ENCODE measurements at regions of chr14 and their contacts with region 1.

Region 1: DNA sequence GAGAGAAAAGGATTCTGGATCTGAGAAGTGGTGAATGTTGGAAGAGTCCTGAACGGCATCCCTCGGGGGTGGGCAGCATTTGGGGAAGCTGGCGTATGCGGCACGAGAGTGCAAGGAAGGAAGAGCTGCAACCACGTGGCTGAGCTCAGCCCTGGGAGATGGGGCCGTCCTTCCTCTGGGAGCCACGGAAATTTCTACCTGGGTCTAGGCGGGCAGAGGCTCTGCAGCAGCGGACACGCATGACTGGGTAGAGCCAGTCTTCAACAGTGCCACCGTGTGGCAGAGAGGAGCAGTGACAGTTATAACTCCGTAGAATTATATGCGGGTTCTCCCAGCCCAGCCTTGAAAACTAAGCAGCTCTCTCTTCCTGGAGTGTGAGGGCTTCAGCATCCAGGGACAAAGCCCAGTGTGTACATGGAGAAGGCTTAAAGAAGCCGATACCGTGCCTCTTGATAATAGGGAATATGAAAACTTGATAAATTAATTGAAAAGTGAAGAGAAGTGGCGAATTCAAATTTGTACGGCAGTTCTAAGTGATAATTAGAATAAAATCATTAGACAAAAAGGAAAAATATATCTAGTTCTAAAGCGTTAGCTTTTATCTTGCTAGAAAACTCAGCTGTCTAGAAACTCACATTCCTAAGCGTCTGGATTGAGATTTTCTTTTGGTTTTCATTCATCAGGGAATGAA is 82.9 kb upstream of the STXBP6 start:
- DNase-seq: peak; percentile 84
- ATAC-seq: peak; percentile 99
- H3K4me3 ChIP-seq: no peak overlapping the region
- H3K27ac ChIP-seq: no peak overlapping the region
- H3K4me1 ChIP-seq: peaks cover 4% of the 10 kb centered on the region; the same call in 1 of the 2 replicates
- H3K27me3 ChIP-seq: peaks cover 0 to 8% of the 10 kb centered on the region in 2 experiments; a peak in 2 of 5 replicates
- CTCF ChIP-seq: peak; percentile 100
- EP300 ChIP-seq: no peak
- POLR2A ChIP-seq: no peak
- RAD21 ChIP-seq: peak; percentile 97

Region 2: DNA sequence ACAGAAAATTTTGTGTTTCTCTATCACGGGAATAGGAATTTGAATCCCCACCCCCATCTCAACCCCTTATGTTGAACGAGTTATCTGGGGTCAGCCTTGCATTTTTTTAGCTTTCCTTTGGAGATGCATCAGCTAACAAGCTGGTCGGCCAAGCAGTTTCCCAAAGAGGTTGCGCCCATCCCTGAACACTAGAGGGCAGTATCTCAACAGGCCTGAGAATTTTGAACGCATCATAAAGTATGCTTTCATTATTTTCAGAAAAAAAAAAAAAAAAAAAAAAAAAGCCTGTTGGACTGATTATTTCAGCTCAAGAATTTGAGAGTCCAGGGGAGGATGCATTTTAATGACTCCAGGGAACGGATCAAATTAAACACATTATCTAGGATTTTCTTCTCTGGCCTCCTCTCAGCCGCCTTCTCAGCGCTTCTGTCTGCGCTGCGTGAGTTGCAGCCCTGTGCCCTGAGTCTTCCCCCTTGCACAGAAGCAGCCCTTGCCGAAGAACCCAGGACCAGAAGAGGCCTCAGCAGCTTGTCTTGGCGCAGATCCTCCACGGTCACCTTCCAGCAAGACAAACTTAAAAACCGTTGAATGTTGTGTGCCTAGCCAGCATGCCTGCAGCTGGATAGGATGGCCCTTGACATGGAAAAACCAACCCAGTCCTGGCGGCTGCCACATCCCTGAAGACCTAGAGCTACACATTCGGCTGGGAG is 422.3 kb before region 1 on chr14:
- CTCF ChIA-PET with region 1: interaction called, 39 read pairs
- POLR2A ChIA-PET with region 1: no interaction called
- in situ Hi-C with region 1: no loop called
- intact Hi-C with region 1: loop called (anchors 1 kb)
- DNase-seq: peak; percentile 71
- ATAC-seq: peak; percentile 81
- H3K4me3 ChIP-seq: no peak overlapping the region
- H3K27ac ChIP-seq: no peak overlapping the region
- H3K4me1 ChIP-seq: peaks cover 7% of the 10 kb centered on the region
- H3K27me3 ChIP-seq: peaks cover 4 to 22% of the 10 kb centered on the region in 2 experiments; a peak in 2 of 5 replicates
- CTCF ChIP-seq: peak; percentile 83
- EP300 ChIP-seq: no peak
- POLR2A ChIP-seq: no peak
- RAD21 ChIP-seq: peak; percentile 65

Region 3: DNA sequence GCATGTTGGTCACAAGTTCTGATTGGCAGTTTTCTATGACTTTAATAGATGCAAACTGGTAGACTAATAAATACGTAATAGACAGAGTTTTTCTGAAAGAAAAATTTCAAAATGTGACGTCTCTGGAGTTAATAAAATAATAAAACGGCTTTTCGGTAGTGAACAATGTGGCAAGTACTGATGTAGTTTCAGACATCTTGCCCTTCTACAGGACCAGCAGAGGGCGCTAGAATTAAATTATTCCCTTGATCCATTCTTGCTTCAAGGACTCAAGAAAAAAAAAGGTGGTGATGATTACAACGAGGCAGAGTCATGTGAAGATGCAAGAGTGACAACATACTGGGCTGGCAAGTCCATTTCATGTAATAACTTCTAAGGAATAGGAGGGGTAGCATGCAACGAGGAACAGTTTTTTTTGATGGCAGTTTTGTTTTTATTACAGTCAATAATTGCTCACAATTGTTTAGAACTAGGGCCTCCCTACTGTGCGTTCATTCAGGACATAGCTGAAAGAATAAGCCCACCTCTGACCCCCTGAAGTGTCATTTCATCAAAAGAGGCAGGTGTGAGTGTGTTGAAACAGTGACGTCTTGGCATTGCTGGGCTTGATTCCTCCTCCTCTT is 397.9 kb before region 1 on chr14:
- CTCF ChIA-PET with region 1: interaction called, 91 read pairs
- POLR2A ChIA-PET with region 1: no interaction called
- in situ Hi-C with region 1: loop called (anchors 5 kb)
- intact Hi-C with region 1: loop called (anchors 1 kb)
- DNase-seq: peak; percentile 86
- ATAC-seq: peak; percentile 95
- H3K4me3 ChIP-seq: no peak overlapping the region
- H3K27ac ChIP-seq: no peak overlapping the region
- H3K4me1 ChIP-seq: no peaks in the 10 kb centered on the region
- H3K27me3 ChIP-seq: no peaks in the 10 kb centered on the region
- CTCF ChIP-seq: peak; percentile 91
- EP300 ChIP-seq: no peak
- POLR2A ChIP-seq: no peak
- RAD21 ChIP-seq: peak; percentile 88

Region 4: DNA sequence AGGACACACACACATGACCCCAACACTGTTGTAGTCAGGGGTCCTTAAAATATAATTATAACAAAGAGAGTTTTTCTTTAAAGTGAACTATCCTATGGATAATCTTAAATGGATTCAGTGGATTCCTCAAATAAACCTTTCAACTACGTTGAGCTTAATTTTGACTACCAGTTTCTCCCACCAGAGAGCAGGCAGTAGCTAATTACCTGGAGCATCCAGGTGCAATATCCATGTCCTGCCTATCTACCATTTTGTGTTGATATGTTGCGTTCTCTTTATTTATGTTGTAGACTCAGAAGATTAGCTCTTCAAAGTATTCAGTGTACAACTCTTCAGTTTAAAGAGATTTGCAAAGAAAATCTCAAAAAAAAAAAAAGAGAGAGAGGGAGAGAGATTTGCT is 371.7 kb before region 1 on chr14:
- CTCF ChIA-PET with region 1: interaction called, 17 read pairs
- POLR2A ChIA-PET with region 1: no interaction called
- in situ Hi-C with region 1: no loop called
- intact Hi-C with region 1: loop called (anchors 1 kb)
- DNase-seq: peak; percentile 28
- ATAC-seq: peak; percentile 71
- H3K4me3 ChIP-seq: no peak overlapping the region
- H3K27ac ChIP-seq: no peak overlapping the region
- H3K4me1 ChIP-seq: no peaks in the 10 kb centered on the region
- H3K27me3 ChIP-seq: no peaks in the 10 kb centered on the region; a peak in 1 of 5 replicates
- CTCF ChIP-seq: peak; percentile 56
- EP300 ChIP-seq: no peak
- POLR2A ChIP-seq: no peak
- RAD21 ChIP-seq: no peak

Region 5: GRCh38 chr14:24806061-24806678 is 326.7 kb before region 1 on chr14:
- CTCF ChIA-PET with region 1: interaction called, 94 read pairs
- POLR2A ChIA-PET with region 1: interaction called, 13 read pairs
- in situ Hi-C with region 1: loop called (anchors 5 kb)
- intact Hi-C with region 1: loop called (anchors 1 kb)
- DNase-seq: peak; percentile 88
- ATAC-seq: peak; percentile 81
- H3K4me3 ChIP-seq: no peak overlapping the region
- H3K27ac ChIP-seq: no peak overlapping the region
- H3K4me1 ChIP-seq: peaks cover 58% of the 10 kb centered on the region
- H3K27me3 ChIP-seq: no peaks in the 10 kb centered on the region
- CTCF ChIP-seq: peak; percentile 99
- EP300 ChIP-seq: no peak
- POLR2A ChIP-seq: no peak
- RAD21 ChIP-seq: peak; percentile 99

Region 6: DNA sequence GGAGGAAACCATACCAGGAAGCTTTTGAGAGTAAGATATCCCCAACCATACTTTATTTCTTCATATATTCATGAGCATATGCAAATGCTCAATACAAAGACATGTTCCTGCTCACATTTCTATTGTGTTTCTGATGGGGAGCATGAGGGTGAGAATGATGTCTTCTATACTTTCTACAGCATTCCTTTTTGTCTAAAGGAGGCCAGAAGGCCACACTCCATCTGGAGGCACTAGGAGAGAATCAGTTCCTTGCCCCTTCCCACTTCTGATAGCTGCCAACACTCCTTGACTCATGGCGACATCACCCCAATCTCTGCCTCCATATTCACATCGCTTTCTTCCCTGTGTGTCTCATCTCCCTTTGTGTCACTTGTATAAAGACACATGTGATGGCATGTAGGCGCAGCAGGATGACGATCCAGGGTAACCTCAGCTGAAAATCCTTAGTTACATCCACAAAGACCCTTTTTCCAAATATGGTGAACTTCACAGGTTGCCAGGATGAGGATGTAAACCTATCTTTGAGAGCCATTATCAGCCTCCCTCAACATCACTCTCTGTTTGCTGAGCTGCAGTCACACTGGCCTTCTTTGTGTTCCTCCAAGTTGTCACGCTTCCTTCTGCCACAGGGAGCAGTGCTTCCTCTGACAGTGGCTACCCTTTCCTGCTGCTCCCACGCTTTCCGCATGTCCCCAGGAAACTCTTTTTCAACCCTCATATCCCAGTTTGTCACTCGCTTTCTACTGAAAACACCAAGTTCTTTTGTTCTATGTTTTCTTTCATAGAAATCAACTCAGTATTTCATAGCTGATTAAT is 179.8 kb before region 1 on chr14:
- CTCF ChIA-PET with region 1: interaction called, 9 read pairs
- POLR2A ChIA-PET with region 1: no interaction called
- in situ Hi-C with region 1: no loop called
- intact Hi-C with region 1: loop called (anchors 1 kb)
- DNase-seq: peak; percentile 81
- ATAC-seq: peak; percentile 99
- H3K4me3 ChIP-seq: no peak overlapping the region
- H3K27ac ChIP-seq: no peak overlapping the region
- H3K4me1 ChIP-seq: peaks cover 15% of the 10 kb centered on the region; the same call in 1 of the 2 replicates
- H3K27me3 ChIP-seq: no peaks in the 10 kb centered on the region
- CTCF ChIP-seq: peak; percentile 67
- EP300 ChIP-seq: no peak
- POLR2A ChIP-seq: no peak
- RAD21 ChIP-seq: peak; percentile 72; the same call in 1 of the 2 replicates

Region 7: GRCh38 chr14:25032092-25032784 is 100.6 kb before region 1 on chr14:
- CTCF ChIA-PET with region 1: no interaction called
- POLR2A ChIA-PET with region 1: no interaction called
- in situ Hi-C with region 1: no loop called
- intact Hi-C with region 1: no loop called
- DNase-seq: peak; percentile 84
- ATAC-seq: peak; percentile 82
- H3K4me3 ChIP-seq: peak overlapping the region; percentile 25 to 62 (median 56)
- H3K27ac ChIP-seq: peak overlapping the region; percentile 6
- H3K4me1 ChIP-seq: peaks cover 48% of the 10 kb centered on the region
- H3K27me3 ChIP-seq: no peaks in the 10 kb centered on the region
- CTCF ChIP-seq: peak; percentile 94
- EP300 ChIP-seq: no peak
- POLR2A ChIP-seq: peak; percentile 31 to 46; a peak in 1 of 4 replicates
- RAD21 ChIP-seq: peak; percentile 88

Region 8: DNA sequence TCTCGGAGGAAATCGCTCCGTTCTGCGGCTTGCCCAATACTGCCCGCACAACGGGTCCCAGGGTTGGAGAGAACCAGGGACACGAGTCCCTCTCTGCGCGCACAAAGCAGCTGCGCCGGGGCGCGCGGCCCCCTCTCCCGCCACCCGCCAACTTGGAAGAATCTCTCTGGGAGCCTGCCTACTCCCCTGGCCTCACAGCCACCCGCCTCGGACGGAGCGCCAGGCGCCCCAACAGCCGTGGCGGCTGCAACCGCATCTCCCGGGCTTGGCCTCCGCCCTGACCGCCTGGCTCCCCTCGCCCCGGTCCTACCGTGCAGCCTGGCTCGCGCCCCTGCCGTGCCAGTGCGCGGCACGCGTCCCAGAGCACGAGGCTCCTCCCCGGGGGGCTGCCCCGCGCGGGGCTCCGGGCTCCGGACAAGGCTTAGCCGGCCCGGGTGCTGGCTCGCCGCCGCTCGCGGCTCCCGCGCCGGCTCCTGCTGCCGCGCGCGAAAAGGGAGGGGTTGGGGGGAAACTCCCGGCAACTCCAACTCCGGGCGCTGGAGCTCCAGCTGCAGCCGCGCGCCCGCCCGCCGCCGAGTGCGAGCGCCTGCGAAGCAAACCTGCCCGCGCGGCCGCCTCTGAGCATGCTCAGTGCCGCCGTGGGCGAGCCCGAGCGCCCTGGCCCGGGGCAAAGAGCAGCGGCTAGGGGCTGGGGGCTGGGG is 83.2 kb before region 1 on chr14 and contains the start of gene STXBP6:
- CTCF ChIA-PET with region 1: no interaction called
- POLR2A ChIA-PET with region 1: no interaction called
- in situ Hi-C with region 1: no loop called
- intact Hi-C with region 1: loop called (anchors 1 kb)
- DNase-seq: peak; percentile 65
- ATAC-seq: peak; percentile 97
- H3K4me3 ChIP-seq: peak within 1 kb of the TSS; percentile 65 to 82 (median 73)
- H3K27ac ChIP-seq: no peak within 1 kb of the TSS
- H3K4me1 ChIP-seq: peaks cover 41% of the 10 kb centered on the region
- H3K27me3 ChIP-seq: peaks cover 0 to 25% of the 10 kb centered on the region in 2 experiments; a peak in 3 of 5 replicates
- CTCF ChIP-seq: peak; percentile 6; the same call in 1 of the 2 replicates
- EP300 ChIP-seq: no peak
- POLR2A ChIP-seq: peak in 1 of 2 experiments; percentile 58; a peak in 1 of 4 replicates
- RAD21 ChIP-seq: 0 out of 2 replicates have a peak, but pooled peaks have one; percentile 68
- total RNA-seq, gene STXBP6: 35.3 and 43.2 TPM in 2 replicates